Activated T-helper 2 cell treated with anti-CD3 and anti-CD28 coated beads, Interferon-gamma antibody, Interleukin-2, Interleukin-4, amounts not matched to agents 10 μg/mL and 5 μg/mL and 100 μg/mL, durations not matched to agents 14 hours and 24 hours and 36 hours (primary cell): ENCODE measurements at regions of chr12 and their contacts with region 1.

Region 1: DNA sequence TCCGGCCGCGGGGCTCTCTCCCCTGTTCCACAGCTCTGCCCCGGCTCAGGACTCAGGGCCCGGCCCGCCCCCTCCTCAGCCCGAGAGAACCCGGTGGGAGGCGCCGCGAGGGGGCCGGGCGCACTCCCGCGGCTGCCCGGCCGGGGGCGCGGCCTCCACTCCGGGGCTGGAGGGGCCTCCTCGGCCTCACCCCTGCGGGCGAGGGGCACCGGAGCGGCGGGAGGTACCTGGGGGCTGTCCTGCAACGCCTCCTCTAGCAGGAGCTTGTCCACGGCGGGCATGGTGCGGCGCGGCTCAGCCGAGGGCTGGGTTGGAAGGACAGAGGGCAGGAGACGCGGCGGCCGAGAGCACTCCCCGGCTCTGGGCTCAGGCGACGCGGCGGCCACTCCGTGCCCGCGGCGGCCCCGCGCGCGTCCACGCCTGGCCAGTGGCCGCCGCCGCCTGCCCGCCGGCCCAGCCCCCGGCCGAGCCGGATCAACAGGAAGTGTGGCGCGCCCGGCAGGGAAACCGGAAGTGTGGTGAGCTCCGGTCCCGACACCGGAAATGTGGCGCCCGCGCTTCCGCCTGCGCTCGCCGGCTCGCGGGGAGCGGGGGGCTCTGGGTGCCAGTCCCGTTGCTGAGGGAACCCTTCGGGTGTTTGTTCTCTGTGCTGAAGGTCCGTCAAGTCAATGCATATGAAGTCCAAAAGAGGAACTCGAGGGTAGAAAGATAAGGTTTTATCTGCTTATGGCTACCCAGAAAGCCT is at the start of gene APPL2:
- DNase-seq: peak; percentile 69
- H3K4me3 Mint-ChIP-seq: peak within 1 kb of the TSS; percentile 88
- H3K27ac Mint-ChIP-seq: peak within 1 kb of the TSS; percentile 75
- H3K4me1 Mint-ChIP-seq: peaks cover 34% of the 10 kb centered on the region
- H3K27me3 Mint-ChIP-seq: no peaks in the 10 kb centered on the region
- total RNA-seq, gene APPL2: 28.8 and 30.4 TPM in 2 replicates

Region 2: GRCh38 chr12:105175397-105175990 is 60.4 kb before region 1 on chr12:
- intact Hi-C with region 1: loop called (anchors 5 kb)
- DNase-seq: no peak
- H3K4me3 Mint-ChIP-seq: no peak overlapping the region
- H3K27ac Mint-ChIP-seq: peak overlapping the region; percentile 1
- H3K4me1 Mint-ChIP-seq: peaks cover 21% of the 10 kb centered on the region
- H3K27me3 Mint-ChIP-seq: no peaks in the 10 kb centered on the region

Region 3: DNA sequence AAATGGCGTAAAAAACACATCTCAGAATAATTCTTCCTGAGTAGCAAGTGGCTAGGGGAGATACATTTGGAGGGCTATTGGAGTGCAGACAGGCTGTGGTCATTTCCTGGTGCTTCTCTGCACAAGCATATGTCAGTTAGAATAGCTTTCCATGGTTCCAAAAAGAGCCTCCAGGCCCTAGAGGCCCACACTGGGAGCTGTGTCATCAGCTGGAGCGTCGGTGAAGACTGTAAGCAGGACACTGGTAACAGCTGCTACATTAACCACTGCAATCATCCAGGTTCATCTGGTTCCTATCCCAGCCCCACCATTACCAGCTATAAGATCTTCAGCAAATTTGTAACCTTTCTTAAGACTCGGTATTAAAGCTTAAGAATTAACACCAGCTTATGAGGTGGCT is 31.8 kb after region 1 on chr12:
- intact Hi-C with region 1: no loop called
- DNase-seq: no peak
- H3K4me3 Mint-ChIP-seq: no peak overlapping the region
- H3K27ac Mint-ChIP-seq: no peak overlapping the region
- H3K4me1 Mint-ChIP-seq: peaks cover 4% of the 10 kb centered on the region
- H3K27me3 Mint-ChIP-seq: no peaks in the 10 kb centered on the region